ENCODE measurements at regions of chr15 and their contacts with region 1.

Region 1: DNA sequence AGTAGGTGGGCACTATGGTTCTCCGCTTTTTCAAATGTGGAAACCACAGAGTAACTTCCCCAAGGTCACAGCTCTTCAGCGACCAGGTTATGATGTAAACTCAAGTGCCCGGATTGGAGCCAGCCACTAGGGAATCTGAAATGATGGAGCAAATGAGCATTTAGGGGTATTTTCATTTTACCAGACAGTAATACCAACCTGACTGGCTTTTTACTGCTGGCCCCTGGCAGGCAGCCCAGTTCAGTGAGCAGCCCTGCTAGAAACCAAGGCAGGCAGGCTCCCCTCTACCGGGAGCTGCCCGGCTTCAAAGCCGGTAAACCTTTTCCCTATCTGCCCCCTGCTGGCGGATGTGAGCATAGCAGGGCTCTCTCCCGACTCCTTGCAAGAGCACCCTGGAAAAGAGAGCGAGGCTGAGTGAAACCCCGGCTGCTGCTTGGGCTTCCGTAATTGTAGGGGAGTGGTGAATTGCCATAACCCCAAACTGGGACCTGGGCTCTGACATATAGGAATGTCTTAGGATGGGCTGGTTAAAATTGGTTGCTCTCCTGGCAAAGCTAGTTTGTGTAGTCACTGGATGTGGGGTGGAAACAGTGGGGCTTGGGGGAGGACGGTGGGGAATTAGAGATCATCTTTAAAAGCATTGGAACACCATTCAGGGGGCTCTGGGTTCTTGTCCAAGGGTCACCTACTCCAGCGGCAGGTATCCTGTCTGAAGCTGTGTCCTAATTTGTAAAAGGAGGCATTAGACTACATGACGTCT is 98.0 kb upstream of the TNFAIP8L3 start:
- DNase-seq: peak; percentile 80
- ATAC-seq: peak; percentile 100
- H3K4me3 ChIP-seq: no peak overlapping the region
- H3K27ac ChIP-seq: no peak overlapping the region
- H3K4me1 ChIP-seq: no peaks in the 10 kb centered on the region
- H3K27me3 ChIP-seq: peaks cover 33% of the 10 kb centered on the region
- CTCF ChIP-seq: peak; percentile 90
- POLR2A ChIP-seq: no peak
- RAD21 ChIP-seq: peak; percentile 81

Region 2: DNA sequence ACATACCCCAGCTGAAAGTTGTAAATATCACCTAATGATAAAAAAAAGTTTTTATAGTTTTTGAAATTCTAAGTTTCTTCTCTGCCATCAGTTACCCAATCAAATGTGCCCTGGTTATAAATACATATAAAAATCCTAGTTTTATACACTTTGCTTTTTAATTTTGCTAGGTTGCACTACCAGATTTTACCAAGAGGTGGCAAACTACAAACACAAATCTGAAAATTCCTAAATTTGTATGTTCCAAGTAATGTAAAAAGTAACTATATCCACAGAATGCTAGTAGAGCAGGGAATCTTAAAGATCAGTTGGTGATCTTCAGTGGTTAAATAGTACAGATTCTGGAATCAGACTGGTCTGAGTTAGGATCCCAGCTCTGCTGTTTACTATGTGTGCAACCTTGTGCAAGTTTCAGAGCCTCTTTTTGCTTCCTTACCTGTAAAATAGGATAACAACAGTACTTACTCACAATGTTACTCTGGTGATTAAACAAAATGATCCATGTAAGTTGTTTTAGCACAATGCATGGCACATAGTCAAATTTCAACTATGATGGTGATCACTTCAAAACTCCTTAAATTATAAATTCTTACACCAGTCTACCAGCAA is 517.1 kb before region 1 on chr15:
- CTCF ChIA-PET with region 1: no interaction called
- POLR2A ChIA-PET with region 1: no interaction called
- dilution Hi-C with region 1: no loop called
- in situ Hi-C with region 1: no loop called
- intact Hi-C with region 1: loop called (anchors 10 kb)
- DNase-seq: peak; percentile 59
- ATAC-seq: peak; percentile 53; the same call in 1 of the 2 replicates
- H3K4me3 ChIP-seq: no peak overlapping the region
- H3K27ac ChIP-seq: no peak overlapping the region
- H3K4me1 ChIP-seq: peaks cover 8% of the 10 kb centered on the region
- H3K27me3 ChIP-seq: no peaks in the 10 kb centered on the region
- CTCF ChIP-seq: peak; percentile 76
- POLR2A ChIP-seq: no peak
- RAD21 ChIP-seq: peak; percentile 71

Region 3: GRCh38 chr15:51172193-51172592 is 20.5 kb before region 1 on chr15:
- CTCF ChIA-PET with region 1: interaction called, 20 read pairs
- POLR2A ChIA-PET with region 1: no interaction called
- dilution Hi-C with region 1: no loop called
- in situ Hi-C with region 1: no loop called
- intact Hi-C with region 1: no loop called
- DNase-seq: peak; percentile 24
- ATAC-seq: peak; percentile 91
- H3K4me3 ChIP-seq: no peak overlapping the region
- H3K27ac ChIP-seq: no peak overlapping the region
- H3K4me1 ChIP-seq: peaks cover 5% of the 10 kb centered on the region; the same call in 1 of the 2 replicates
- H3K27me3 ChIP-seq: no peaks in the 10 kb centered on the region
- CTCF ChIP-seq: no peak
- POLR2A ChIP-seq: no peak
- RAD21 ChIP-seq: no peak

Region 4: DNA sequence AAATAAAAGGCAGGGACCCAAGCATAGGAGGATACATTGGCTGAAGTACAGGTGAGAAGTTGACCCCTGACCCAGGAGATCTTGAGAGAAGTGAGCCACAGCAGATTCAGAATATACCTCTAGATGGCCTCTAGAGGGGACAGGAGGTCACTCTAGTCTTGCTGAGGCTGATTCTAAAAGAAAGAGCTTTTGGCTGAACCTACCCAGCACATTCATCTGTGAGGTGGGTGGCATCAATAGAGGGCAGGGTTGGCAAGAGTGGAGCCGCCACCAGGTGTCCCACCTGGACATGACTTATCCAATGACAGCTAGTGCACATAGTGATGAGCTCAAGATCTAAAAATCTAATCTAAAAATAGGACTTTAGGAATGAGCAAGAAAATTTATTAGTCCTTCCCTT is 94.1 kb after region 1 on chr15:
- CTCF ChIA-PET with region 1: no interaction called
- POLR2A ChIA-PET with region 1: no interaction called
- dilution Hi-C with region 1: no loop called
- in situ Hi-C with region 1: no loop called
- intact Hi-C with region 1: no loop called
- DNase-seq: no peak
- ATAC-seq: no peak
- H3K4me3 ChIP-seq: no peak overlapping the region
- H3K27ac ChIP-seq: no peak overlapping the region
- H3K4me1 ChIP-seq: no peaks in the 10 kb centered on the region; the same call in 1 of the 2 replicates
- H3K27me3 ChIP-seq: peaks cover 47% of the 10 kb centered on the region
- CTCF ChIP-seq: no peak
- POLR2A ChIP-seq: no peak
- RAD21 ChIP-seq: no peak

Measured in IMR-90 (cell line).